ENCODE measurements at regions of chr14 and their contacts with region 1.

Region 1: DNA sequence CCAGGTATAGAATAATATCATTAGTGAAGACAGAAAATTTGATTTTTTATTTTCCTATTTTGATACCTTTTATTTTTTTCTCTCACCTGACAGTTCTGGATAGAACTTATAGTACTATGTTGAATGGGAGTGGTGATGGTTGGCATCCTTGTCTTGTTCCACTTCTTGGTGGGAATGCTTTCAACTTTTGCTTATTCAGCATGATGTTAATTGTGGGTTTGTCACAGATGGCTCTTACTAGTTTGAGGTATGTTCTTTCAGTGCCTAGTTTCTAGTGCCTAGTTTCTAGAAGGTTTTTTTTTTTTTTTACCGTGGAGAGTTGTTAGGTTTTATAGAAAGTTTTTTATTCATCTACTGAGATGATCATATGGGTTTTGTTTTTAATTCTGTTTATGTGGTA is 516.3 kb upstream of the NOVA1 start:
- DNase-seq: no peak
- H3K4me3 ChIP-seq: no peak overlapping the region
- CTCF ChIP-seq: no peak

Region 2: GRCh38 chr14:27069640-27070039 is 44.5 kb before region 1 on chr14:
- in situ Hi-C with region 1: loop called (anchors 5 kb)
- DNase-seq: no peak
- H3K4me3 ChIP-seq: no peak overlapping the region
- CTCF ChIP-seq: no peak